OCI-LY7 (cell line): ENCODE measurements at regions of chr14 and their contacts with region 1.

Region 1: DNA sequence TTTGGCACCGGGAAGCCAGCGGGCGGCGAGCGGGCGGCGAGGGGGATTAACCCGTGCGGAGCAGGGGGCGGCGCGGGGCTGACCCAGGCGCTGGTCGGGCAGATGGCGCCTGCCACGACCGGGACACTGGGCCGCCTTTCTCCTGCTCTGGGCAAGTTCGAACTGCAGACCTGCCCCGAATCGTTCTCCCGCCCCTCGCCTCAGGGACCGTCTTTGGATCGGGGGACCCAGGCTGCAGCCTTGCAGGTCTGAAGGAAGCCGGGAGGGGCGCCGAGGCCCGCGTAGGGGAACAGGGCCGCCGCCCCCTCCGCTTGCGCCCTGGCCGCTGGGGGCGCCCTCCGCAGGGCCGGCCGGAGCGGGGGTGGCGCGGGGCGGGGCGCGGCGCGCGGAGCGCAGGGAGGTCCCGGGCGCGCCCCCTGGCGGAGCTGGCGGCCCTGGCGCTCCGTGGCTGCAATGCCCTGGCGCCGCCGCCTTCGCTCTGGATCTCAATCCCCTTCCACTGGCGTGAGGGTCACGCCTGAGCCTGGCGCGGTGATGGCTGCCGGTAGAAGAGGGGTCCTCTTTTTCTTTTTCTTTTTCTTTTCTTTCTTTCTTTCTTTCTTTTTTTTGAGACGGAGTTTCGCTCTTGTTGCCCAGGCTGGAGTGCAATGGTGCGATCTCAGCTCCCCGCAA is 449 bp upstream of the LTBP2 start:
- DNase-seq: peak; percentile 86
- H3K4me3 ChIP-seq: peak overlapping the region; percentile 68
- H3K27ac ChIP-seq: no peak overlapping the region
- H3K4me1 ChIP-seq: peaks cover 24% of the 10 kb centered on the region
- CTCF ChIP-seq: peak; percentile 64

Region 2: DNA sequence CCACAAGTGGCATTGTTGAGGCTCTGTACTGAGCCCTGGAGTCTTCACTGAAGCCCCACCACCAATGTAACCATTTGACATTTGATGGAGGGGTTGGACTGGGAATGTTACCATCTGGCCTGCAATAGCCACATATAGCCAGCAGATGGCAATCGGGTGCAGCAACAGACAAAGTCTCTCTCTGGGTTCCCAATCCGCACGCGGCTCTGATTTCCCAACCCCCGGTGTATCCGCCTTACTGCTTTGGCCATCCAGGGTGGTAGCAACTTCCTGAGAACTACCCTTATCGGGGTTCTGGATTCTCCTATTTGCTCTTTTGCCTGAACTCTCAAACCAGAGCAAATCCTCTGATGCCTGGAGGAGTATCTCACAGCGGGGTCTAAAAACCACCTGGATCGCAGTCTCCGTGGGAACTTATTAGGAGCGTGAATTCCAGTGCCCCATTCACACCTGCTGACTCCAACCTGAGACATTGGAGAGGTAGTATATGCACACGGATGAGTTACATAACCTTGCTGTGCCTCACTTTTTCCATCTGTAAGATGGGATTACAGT is 250.0 kb before region 1 on chr14:
- CTCF ChIA-PET with region 1: no interaction called
- POLR2A ChIA-PET with region 1: no interaction called
- intact Hi-C with region 1: loop called (anchors 5 kb)
- DNase-seq: peak; percentile 60
- H3K4me3 ChIP-seq: no peak overlapping the region
- H3K27ac ChIP-seq: no peak overlapping the region
- H3K4me1 ChIP-seq: no peaks in the 10 kb centered on the region
- CTCF ChIP-seq: peak; percentile 98

Region 3: DNA sequence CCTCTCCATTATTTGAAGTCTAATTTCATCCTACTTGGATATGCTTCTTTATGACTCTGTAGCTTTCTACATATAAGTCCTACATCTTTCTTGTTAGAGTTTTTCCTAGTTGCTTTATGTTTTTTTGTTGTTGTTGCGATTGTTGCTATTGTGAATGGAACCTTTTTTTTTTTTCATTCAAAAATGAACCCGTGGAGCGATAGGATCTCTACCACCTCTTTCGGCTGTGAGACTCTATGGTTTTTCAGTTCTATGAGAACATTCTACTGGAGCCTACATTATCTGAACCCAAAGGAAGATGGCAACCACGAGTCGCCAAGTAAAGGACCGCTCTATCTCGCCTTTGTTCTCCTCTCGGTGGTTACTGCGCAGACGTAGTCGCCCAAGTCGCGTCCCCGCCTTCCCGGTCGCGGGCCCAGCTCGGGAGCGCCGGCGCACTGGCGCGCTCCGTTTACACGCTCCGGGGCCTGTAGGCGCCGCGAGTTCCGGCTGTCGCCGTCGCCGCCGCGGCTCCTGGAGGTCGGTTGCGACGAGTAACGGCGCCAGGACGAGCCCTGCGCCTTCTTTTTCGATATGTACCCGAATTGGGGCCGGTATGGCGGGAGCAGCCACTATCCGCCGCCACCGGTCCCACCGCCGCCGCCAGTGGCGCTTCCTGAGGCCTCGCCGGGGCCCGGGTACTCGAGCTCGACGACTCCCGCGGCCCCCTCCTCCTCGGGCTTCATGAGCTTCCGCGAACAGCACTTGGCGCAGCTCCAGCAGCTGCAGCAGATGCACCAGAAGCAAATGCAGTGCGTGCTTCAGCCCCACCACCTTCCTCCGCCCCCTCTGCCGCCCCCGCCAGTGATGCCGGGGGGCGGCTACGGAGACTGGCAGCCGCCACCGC is 150.7 kb after region 1 on chr14 and contains the start of gene YLPM1:
- CTCF ChIA-PET with region 1: no interaction called
- POLR2A ChIA-PET with region 1: no interaction called
- intact Hi-C with region 1: loop called (anchors 1 kb)
- DNase-seq: peak; percentile 98
- H3K4me3 ChIP-seq: peak within 1 kb of the TSS; percentile 95
- H3K27ac ChIP-seq: peak within 1 kb of the TSS; percentile 72
- H3K4me1 ChIP-seq: peaks cover 39% of the 10 kb centered on the region
- CTCF ChIP-seq: peak; percentile 81
- total RNA-seq, gene YLPM1: 45.2 and 54.3 TPM in 2 replicates

Region 4: GRCh38 chr14:74838166-74838565 is 225.7 kb after region 1 on chr14:
- CTCF ChIA-PET with region 1: interaction called, 3 read pairs
- POLR2A ChIA-PET with region 1: no interaction called
- intact Hi-C with region 1: loop called (anchors 5 kb)
- DNase-seq: no peak
- H3K4me3 ChIP-seq: no peak overlapping the region
- H3K27ac ChIP-seq: no peak overlapping the region
- H3K4me1 ChIP-seq: peaks cover 35% of the 10 kb centered on the region
- CTCF ChIP-seq: no peak

Region 5: GRCh38 chr14:74905375-74906142 is 293.1 kb after region 1 on chr14:
- CTCF ChIA-PET with region 1: no interaction called
- POLR2A ChIA-PET with region 1: no interaction called
- intact Hi-C with region 1: loop called (anchors 2 kb)
- DNase-seq: peak; percentile 68
- H3K4me3 ChIP-seq: no peak overlapping the region
- H3K27ac ChIP-seq: no peak overlapping the region
- H3K4me1 ChIP-seq: peaks cover 8% of the 10 kb centered on the region
- CTCF ChIP-seq: peak; percentile 98

Region 6: DNA sequence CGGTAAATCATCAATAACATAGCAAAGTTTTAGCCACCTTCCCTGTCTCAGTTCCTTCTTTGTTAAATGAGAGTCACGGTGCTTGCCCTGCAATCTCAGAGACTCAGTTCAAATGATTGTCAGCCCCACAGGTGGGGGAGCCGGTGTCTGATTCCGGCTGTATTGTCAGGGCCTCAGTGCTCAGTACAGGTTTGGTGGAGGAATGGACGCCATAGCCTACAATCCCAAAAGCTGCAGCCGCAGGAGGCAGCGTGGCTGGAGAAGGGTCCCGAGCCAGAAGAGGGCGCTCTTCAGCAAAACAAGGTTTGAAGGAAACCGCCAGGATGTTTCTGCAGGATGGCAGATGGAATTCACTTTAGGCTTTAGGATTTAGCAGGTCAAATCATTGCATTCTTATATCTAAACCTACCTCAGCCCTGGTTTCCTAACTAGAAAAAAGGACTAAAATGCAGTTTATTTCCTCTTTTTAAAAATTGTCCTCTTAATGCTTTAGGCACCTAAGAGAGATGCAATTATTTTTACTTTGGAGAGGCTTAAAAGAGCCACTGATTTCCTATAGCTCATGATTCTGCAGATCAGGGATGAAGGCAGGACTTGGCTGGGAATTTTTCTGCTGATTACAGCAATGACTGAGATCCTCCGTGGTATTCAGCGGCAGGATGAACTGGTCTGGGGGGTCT is 695.4 kb after region 1 on chr14:
- CTCF ChIA-PET with region 1: no interaction called
- POLR2A ChIA-PET with region 1: no interaction called
- intact Hi-C with region 1: no loop called
- DNase-seq: peak; percentile 86
- H3K4me3 ChIP-seq: no peak overlapping the region
- H3K27ac ChIP-seq: peak overlapping the region; percentile 19
- H3K4me1 ChIP-seq: peaks cover 31% of the 10 kb centered on the region
- CTCF ChIP-seq: peak; percentile 100